ENCODE measurements at regions of chr3 and their contacts with region 1.

Region 1: DNA sequence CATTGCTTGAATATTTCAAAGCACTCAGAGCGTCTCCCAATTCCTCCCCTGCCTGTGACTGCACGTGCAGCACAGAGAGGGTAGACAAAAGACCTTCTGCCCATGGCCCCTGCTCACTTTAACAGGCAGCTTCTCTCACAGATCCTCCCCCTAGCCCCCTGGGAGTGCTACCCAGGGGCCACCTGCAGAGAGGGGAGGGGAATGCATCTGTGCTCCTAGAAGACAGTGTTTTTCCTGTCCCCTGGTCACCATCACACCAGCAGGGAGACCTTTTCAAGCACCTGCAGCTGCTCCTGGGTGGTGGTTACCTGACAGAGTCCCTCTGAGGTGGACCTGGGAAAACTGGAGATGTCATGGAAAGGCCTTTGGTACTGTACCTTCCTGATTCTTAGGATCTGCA is 56.7 kb upstream of the PRR23C start:
- DNase-seq: no peak
- ATAC-seq: no peak
- H3K4me3 ChIP-seq: no peak overlapping the region
- H3K27ac ChIP-seq: no peak overlapping the region
- H3K4me1 ChIP-seq: no peaks in the 10 kb centered on the region
- H3K27me3 ChIP-seq: no peaks in the 10 kb centered on the region
- CTCF ChIP-seq: no peak

Region 2: DNA sequence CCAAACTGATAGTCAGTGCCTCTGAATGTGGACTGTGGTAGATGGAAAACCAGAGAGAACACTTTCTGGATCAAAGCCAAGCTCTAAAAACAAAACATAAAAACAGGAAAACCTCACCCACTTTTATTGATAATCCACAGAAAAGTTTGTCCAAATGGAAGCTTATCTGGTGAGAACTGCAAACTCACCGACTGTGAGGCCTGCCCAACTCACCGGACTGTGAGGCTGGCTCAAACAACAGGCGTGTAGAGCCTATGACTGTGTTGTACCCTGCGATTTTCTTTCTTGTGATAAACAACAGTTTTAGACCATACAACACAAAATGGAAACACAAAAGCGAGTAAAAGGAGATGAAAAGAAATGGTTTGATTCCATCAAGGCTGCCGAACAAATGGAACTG is 63.9 kb before region 1 on chr3:
- CTCF ChIA-PET with region 1: no interaction called
- POLR2A ChIA-PET with region 1: interaction called, 20 read pairs
- in situ Hi-C with region 1: no loop called
- intact Hi-C with region 1: no loop called
- DNase-seq: no peak
- ATAC-seq: no peak
- H3K4me3 ChIP-seq: no peak overlapping the region
- H3K27ac ChIP-seq: no peak overlapping the region
- H3K4me1 ChIP-seq: no peaks in the 10 kb centered on the region
- H3K27me3 ChIP-seq: no peaks in the 10 kb centered on the region; the same call in 1 of the 2 replicates
- CTCF ChIP-seq: no peak

Measured in Panc1 (cell line).